Thyroid gland (tissue), 4 donors: ENCODE measurements at regions of chr19 and their contacts with region 1.

Region 1: GRCh38 chr19:10403137-10404021 is at the start of gene CDC37:
- DNase-seq: peak; percentile 95 to 96
- H3K4me3 ChIP-seq: peak within 1 kb of the TSS; percentile 73 to 81 (median 78)
- H3K27ac ChIP-seq: peak within 1 kb of the TSS; percentile 33 to 64 (median 57)
- H3K4me1 ChIP-seq: peaks cover 25 to 35% of the 10 kb centered on the region in 2 donors
- H3K27me3 ChIP-seq: peaks cover 6% of the 10 kb centered on the region
- CTCF ChIP-seq: no peak
- POLR2A ChIP-seq: peak; percentile 34 to 82
- total RNA-seq, gene CDC37: 99.7 to 154 (median 125) TPM

Region 2: GRCh38 chr19:10478903-10479384 is 75.6 kb after region 1 on chr19:
- intact Hi-C with region 1: loop called (anchors 10 kb)
- DNase-seq: peak; percentile 81 to 87
- H3K4me3 ChIP-seq: peak overlapping the region in 1 of 3 donors; percentile 28
- H3K27ac ChIP-seq: no peak overlapping the region
- H3K4me1 ChIP-seq: peaks cover 0 to 9% of the 10 kb centered on the region in 2 donors
- H3K27me3 ChIP-seq: no peaks in the 10 kb centered on the region
- CTCF ChIP-seq: peak in 4 of 6 experiments; percentile 11 to 71 (median 36)
- POLR2A ChIP-seq: no peak